ENCODE measurements at regions of chr22 and their contacts with region 1.

Region 1: DNA sequence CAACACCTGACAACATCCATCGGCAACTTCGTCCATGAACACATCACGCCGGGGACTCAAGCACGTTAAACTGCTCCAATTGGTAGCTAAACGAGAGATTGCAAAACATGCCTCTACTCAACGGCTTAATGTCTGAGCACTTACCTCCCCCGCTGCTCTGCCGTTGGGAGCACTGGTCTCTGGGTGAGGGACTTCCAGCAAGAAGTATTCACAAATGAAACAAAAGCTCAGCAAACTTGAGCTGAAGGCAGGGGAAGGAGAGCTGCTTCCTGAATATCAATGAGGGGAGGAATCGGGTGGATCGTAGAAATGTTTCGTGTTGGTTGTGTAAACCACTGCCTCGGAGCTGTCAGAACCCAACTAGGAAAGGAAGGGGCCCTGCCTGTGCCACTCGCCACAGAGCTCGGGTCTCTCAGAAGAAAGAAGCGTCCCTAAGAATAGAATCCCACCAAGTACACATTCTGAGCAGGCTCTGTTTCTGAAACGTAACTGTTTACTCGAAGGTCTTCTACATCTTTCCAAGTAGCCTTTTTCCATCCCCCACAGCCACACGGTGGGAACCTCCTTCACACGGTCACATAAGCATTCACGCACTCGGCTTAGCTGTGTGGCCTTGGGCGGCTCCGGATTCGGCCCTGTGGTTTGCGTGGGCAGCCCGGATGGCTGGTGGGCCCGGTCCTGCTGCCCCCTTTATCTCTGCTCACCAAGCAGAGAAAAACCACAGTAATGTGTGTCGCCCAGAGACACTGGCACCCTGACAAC is at the start of gene MLC1:
- DNase-seq: no peak
- H3K4me3 ChIP-seq: no peak within 1 kb of the TSS
- H3K27ac ChIP-seq: peak within 1 kb of the TSS in 1 of 2 donors; percentile 6
- H3K4me1 ChIP-seq: no peaks in the 10 kb centered on the region
- H3K27me3 ChIP-seq: peaks cover 6% of the 10 kb centered on the region
- CTCF ChIP-seq: no peak
- POLR2A ChIP-seq: no peak
- total RNA-seq, gene MLC1: 0.68 to 1.1 TPM

Region 2: DNA sequence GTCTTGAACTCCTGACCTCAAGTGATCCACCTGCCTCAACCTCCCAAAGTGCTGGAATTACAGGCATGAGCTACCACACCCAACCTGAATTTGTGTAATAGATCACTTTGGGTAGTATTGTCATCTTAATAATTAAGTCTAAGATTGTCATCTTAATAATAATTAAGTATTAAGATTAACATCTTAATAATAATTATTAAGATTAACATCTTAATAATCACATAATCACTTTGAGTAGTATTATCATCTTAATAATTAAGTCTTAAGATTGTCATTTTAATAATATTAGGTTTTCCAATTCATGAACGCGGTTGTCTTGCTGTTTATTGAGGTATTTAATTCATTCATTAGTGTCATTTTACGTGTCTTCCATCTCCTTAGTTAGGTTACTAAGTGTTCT is 12.7 kb after region 1 on chr22:
- intact Hi-C with region 1: no loop called
- DNase-seq: no peak
- H3K4me3 ChIP-seq: no peak overlapping the region
- H3K27ac ChIP-seq: no peak overlapping the region
- H3K4me1 ChIP-seq: no peaks in the 10 kb centered on the region
- H3K27me3 ChIP-seq: no peaks in the 10 kb centered on the region
- CTCF ChIP-seq: no peak
- POLR2A ChIP-seq: no peak

Region 3: DNA sequence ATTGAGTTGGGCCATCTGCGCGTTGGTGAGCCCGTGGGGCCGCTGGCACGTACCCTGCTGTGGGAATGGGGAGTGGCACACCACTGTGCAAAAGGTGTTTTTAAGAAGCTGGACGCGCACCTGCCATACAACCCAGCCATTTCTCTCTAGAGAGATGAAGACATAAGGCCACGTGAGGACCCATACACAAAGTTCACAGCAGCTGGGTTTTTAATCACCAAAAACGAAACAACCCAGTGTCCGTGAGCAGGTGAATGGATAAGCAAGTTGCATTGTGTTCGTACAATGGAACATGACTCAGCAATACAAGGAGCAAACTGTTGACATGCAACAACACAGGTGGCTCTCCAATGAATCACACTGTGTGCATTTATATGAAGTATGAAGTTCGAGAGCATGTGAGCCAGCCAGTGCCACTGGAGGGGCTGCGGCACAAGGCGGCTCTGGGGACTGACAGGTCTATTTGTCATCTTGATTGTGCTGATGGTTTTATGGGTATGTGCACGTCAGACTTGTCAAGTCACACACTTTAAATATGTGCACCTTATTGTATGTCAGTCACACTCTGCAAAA is 54.5 kb after region 1 on chr22:
- intact Hi-C with region 1: loop called (anchors 10 kb)
- DNase-seq: no peak
- H3K4me3 ChIP-seq: no peak overlapping the region
- H3K27ac ChIP-seq: no peak overlapping the region
- H3K4me1 ChIP-seq: peaks cover 18% of the 10 kb centered on the region
- H3K27me3 ChIP-seq: no peaks in the 10 kb centered on the region
- CTCF ChIP-seq: no peak
- POLR2A ChIP-seq: no peak